SK-N-SH (cell line): ENCODE measurements at regions of chr5 and their contacts with region 1.

Region 1: GRCh38 chr5:35777358-35778087 is 79.2 kb upstream of the IL7R start:
- DNase-seq: peak; percentile 34
- H3K4me3 ChIP-seq: no peak overlapping the region
- H3K27ac ChIP-seq: no peak overlapping the region
- H3K4me1 ChIP-seq: peaks cover 0 to 14% of the 10 kb centered on the region in 2 experiments; a peak in 2 of 4 replicates
- H3K27me3 ChIP-seq: no peaks in the 10 kb centered on the region
- CTCF ChIP-seq: peak; percentile 74
- EP300 ChIP-seq: no peak
- RAD21 ChIP-seq: peak; percentile 68

Region 2: DNA sequence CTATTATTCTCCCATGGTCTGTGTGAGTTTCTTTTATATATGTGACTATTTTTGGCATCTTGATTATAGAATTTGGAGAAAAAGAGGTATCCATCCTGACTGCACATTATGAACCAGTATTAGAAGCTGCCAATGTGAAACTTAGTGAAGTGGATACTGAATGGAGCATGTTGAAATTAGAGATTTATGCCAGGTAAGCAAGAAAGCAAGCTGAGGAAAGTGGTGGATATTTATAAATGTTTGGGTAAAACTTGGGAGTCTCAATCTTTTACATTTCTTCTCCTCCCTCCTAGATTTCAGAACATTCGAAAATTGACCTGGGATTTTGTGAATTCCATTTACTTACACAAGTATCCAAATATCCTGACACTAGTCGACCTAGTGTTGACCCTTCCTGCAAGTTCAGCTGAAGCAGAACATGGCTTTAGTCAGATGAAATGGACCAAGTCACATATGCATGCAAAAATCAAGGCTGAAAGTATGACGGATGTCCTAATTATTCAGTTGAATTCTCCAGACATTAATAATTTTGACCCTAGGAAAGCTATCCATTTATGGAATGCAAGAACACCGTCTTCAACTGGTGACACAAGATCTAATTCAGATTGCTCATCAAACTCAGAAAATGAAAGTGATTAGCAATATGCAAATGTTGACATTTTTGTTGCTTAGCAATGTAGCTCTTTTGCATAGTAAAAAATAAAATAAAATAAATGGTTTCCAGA is 12.4 kb after region 1 on chr5:
- CTCF ChIA-PET with region 1: interaction called, 11 read pairs
- POLR2A ChIA-PET with region 1: no interaction called
- DNase-seq: no peak
- H3K4me3 ChIP-seq: no peak overlapping the region
- H3K27ac ChIP-seq: no peak overlapping the region
- H3K4me1 ChIP-seq: 0 out of 4 replicates have a peak, but pooled peaks cover 0 to 6% of the 10 kb centered on the region in 2 experiments
- H3K27me3 ChIP-seq: no peaks in the 10 kb centered on the region
- CTCF ChIP-seq: no peak
- EP300 ChIP-seq: no peak
- RAD21 ChIP-seq: no peak

Region 3: GRCh38 chr5:35819668-35820067 is 42.1 kb after region 1 on chr5:
- CTCF ChIA-PET with region 1: interaction called, 13 read pairs
- POLR2A ChIA-PET with region 1: no interaction called
- DNase-seq: no peak
- H3K4me3 ChIP-seq: no peak overlapping the region
- H3K27ac ChIP-seq: no peak overlapping the region
- H3K4me1 ChIP-seq: no peaks in the 10 kb centered on the region
- H3K27me3 ChIP-seq: no peaks in the 10 kb centered on the region
- CTCF ChIP-seq: no peak
- EP300 ChIP-seq: no peak
- RAD21 ChIP-seq: no peak

Region 4: GRCh38 chr5:35920890-35921289 is 143.4 kb after region 1 on chr5:
- CTCF ChIA-PET with region 1: interaction called, 150 read pairs
- POLR2A ChIA-PET with region 1: no interaction called
- DNase-seq: peak; percentile 33
- H3K4me3 ChIP-seq: no peak overlapping the region
- H3K27ac ChIP-seq: no peak overlapping the region
- H3K4me1 ChIP-seq: peaks cover 0 to 3% of the 10 kb centered on the region in 2 experiments; a peak in 2 of 4 replicates
- H3K27me3 ChIP-seq: no peaks in the 10 kb centered on the region
- CTCF ChIP-seq: peak; percentile 50
- EP300 ChIP-seq: no peak
- RAD21 ChIP-seq: peak; percentile 55

Region 5: DNA sequence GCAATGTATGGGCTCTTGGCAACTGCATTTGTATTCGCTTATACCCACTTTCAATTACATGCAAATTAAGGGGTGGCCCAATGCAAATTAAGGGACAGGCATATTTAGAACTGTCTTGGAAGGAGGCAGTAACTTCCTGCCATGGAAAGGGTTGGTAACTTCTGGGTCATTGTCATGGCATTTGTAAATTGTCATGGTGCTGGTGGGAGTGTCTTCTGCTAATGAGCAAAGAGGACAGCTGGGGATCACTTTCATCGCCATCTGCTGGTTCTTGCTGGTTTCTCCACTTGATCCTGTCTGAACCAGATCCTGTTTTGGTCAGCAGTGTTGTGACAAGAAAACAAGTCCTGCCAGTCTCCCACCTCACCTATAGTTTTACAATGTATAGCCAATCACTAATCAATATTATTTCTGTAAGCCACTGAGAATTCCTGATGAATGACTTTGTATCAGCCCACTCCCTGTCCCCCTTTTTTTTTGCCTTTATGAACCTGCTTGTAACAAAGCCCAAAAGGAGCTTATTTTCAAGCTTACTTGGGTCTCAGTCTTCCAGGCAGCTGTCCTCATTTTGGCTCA is 312.6 kb after region 1 on chr5:
- CTCF ChIA-PET with region 1: no interaction called
- POLR2A ChIA-PET with region 1: no interaction called
- DNase-seq: peak; percentile 4
- H3K4me3 ChIP-seq: no peak overlapping the region
- H3K27ac ChIP-seq: no peak overlapping the region
- H3K4me1 ChIP-seq: no peaks in the 10 kb centered on the region
- H3K27me3 ChIP-seq: no peaks in the 10 kb centered on the region
- CTCF ChIP-seq: peak; percentile 44
- EP300 ChIP-seq: no peak
- RAD21 ChIP-seq: peak; percentile 26; the same call in 1 of the 2 replicates